K562 (cell line): ENCODE measurements at regions of chr1 and their contacts with region 1.

Region 1: DNA sequence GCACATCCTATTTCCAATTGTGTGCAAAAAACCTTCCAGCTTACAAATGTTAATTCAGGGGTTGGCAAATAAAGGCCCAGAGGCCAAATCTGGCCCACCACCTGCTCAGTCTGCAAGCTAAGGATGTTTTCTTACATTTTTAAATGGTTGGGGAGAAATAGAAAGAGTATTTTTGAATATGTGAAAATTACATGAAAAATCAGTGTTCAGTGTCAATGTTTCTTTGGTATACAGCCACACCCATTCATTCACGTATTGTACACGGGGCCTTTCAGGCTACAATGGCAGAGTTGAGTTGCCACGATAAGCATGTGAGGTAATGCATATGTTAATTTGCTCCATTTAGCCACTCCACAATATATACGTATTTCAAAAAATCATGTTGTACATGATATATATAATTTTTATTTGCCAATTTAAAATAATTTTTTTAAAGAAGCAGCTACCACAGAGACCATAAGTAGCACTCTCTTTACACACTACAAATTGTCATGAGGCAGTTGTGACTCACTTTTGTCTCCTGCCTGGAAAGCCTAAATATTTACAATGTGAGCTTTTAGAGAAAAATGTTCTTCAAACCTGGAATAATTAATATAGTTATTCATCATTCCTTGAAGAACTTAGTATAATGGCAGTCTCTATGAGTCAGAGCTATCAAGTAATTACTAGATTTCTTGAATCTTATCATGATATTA is 189.6 kb downstream of the SMYD3 start:
- DNase-seq: no peak
- ATAC-seq: no peak
- H3K4me3 ChIP-seq: no peak overlapping the region
- H3K27ac ChIP-seq: no peak overlapping the region
- H3K4me1 ChIP-seq: no peaks in the 10 kb centered on the region
- H3K27me3 ChIP-seq: no peaks in the 10 kb centered on the region
- CTCF ChIP-seq: no peak
- EP300 ChIP-seq: no peak
- POLR2A ChIP-seq: no peak
- RAD21 ChIP-seq: no peak

Region 2: DNA sequence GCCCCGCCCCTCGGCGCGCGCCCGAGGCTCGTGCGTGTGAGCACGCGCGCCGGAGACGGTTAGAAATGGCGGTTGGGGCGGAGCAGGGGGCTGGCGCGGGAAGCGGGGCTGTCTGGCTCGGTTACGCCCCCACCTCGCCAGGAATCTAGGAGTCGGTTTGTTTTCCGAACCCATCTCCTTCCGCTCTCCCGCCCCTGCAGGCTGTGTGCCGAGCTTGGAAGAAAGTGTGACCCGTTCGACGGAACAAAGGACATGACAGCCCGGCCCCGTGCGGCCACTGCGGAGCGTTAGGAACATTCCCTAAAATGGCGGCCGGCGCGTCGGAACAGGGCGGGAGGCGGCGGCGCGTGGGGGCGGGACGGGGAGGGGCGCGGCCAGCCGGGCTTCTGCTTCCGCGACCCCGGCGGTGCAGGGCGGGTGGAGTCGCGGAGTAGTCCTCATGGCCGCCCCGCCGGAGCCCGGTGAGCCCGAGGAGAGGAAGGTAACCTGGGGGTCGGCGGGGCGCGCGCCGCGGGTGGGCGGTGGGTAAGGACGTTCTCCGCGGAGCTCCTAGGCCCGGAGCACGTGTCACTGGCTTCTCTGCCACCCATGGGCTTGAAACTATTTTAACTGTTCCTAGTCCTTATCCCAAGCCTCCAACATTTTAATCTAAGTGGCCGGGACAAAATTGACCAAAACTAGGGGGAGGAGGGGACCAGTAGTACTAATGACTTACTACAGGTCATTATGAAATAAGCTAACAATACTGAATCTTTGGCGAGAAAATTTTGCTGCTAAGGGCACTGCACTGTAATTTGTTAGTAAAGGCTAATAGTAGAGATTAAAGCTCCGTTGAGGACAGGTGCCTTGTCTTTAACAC is 1482.0 kb before region 1 on chr1 and contains the start of gene COX20:
- CTCF ChIA-PET with region 1: no interaction called
- POLR2A ChIA-PET with region 1: no interaction called
- in situ Hi-C with region 1: no loop called
- intact Hi-C with region 1: no loop called
- DNase-seq: peak; percentile 94 to 98 (median 95)
- ATAC-seq: peak; percentile 79
- H3K4me3 ChIP-seq: peak within 1 kb of the TSS; percentile 74
- H3K27ac ChIP-seq: peak within 1 kb of the TSS; percentile 98
- H3K4me1 ChIP-seq: peaks cover 14 to 15% of the 10 kb centered on the region in 2 experiments; a peak in 4 of 5 replicates
- H3K27me3 ChIP-seq: no peaks in the 10 kb centered on the region
- CTCF ChIP-seq: no peak
- EP300 ChIP-seq: 0 out of 2 replicates have a peak, but pooled peaks have one; percentile 40
- POLR2A ChIP-seq: peak; percentile 97
- RAD21 ChIP-seq: no peak
- polyA plus RNA-seq, gene COX20: 145 to 171 TPM

Region 3: GRCh38 chr1:246254854-246255253 is 62.6 kb before region 1 on chr1:
- CTCF ChIA-PET with region 1: no interaction called
- POLR2A ChIA-PET with region 1: no interaction called
- in situ Hi-C with region 1: no loop called
- intact Hi-C with region 1: loop called (anchors 5 kb)
- DNase-seq: no peak
- ATAC-seq: no peak
- H3K4me3 ChIP-seq: no peak overlapping the region
- H3K27ac ChIP-seq: no peak overlapping the region
- H3K4me1 ChIP-seq: no peaks in the 10 kb centered on the region
- H3K27me3 ChIP-seq: no peaks in the 10 kb centered on the region
- CTCF ChIP-seq: no peak
- EP300 ChIP-seq: no peak
- POLR2A ChIP-seq: no peak
- RAD21 ChIP-seq: no peak